BJ (cell line): ENCODE measurements at regions of chr7 and their contacts with region 1.

Region 1: GRCh38 chr7:42262964-42263363 is 26.0 kb upstream of the GLI3 start:
- DNase-seq: peak; percentile 71
- H3K4me3 ChIP-seq: no peak overlapping the region
- H3K27me3 ChIP-seq: 0 out of 2 replicates have a peak, but pooled peaks cover 1% of the 10 kb centered on the region
- CTCF ChIP-seq: no peak

Region 2: GRCh38 chr7:42128703-42129102 is 134.3 kb before region 1 on chr7:
- CTCF ChIA-PET with region 1: no interaction called
- POLR2A ChIA-PET with region 1: interaction called, 17 read pairs
- DNase-seq: no peak
- H3K4me3 ChIP-seq: no peak overlapping the region
- H3K27me3 ChIP-seq: no peaks in the 10 kb centered on the region
- CTCF ChIP-seq: peak; percentile 25; the same call in 1 of the 2 replicates

Region 3: GRCh38 chr7:42272793-42273665 is 10.1 kb after region 1 on chr7:
- CTCF ChIA-PET with region 1: interaction called, 14 read pairs
- POLR2A ChIA-PET with region 1: no interaction called
- DNase-seq: no peak
- H3K4me3 ChIP-seq: no peak overlapping the region
- H3K27me3 ChIP-seq: no peaks in the 10 kb centered on the region
- CTCF ChIP-seq: peak; percentile 70

Region 4: DNA sequence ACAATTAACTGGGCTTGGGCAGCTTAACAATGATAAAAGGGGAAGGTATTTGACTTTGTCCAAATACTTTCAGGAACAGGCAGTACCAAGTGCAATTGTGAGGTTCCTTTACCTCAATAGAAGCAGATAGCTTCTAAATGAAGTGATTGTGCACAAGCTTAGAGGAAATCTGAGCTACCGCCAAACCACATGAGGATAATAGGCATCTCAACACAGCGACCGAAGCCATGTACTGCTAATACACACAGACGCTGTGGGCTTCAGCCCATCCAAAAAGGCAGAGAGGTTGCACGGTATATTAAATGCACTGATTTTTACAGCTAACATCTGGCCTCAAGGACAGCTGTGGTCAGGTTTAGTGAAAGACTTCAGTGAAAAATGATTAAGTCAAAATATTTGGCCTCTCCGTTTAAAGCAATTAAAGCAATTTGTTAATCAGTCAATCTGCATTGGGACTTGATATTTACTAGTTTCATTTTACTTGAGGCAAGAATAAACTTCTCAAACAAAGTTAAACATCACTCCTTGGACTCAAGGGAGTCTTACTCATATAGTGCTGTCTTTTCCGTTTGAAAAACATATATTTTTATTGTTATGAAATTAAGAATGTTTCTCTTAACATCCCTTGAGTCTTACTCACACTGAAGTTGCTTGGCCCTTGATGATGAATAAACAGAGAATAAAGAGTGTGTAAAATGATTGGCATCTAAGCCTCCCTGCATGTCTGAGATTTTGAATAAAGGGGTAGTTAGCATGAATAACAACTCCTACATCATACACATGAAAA is 342.6 kb after region 1 on chr7:
- CTCF ChIA-PET with region 1: no interaction called
- POLR2A ChIA-PET with region 1: no interaction called
- DNase-seq: no peak
- H3K4me3 ChIP-seq: no peak overlapping the region
- H3K27me3 ChIP-seq: no peaks in the 10 kb centered on the region
- CTCF ChIP-seq: no peak